CD4-positive, alpha-beta memory T cell (primary cell): ENCODE measurements at regions of chr14 and their contacts with region 1.

Region 1: GRCh38 chr14:106436310-106436905 is 910.0 kb downstream of the TMEM121 start:
- DNase-seq: peak in 4 of 5 donors; percentile 47 to 66 (median 56)
- H3K4me3 ChIP-seq: no peak overlapping the region
- H3K4me3 Mint-ChIP-seq: no peak overlapping the region
- H3K27ac ChIP-seq: no peak overlapping the region
- H3K27ac Mint-ChIP-seq: no peak overlapping the region
- H3K4me1 ChIP-seq: no peaks in the 10 kb centered on the region
- H3K4me1 Mint-ChIP-seq: peaks cover 0 to 4% (median 1%) of the 10 kb centered on the region in 4 donors
- H3K27me3 ChIP-seq: no peaks in the 10 kb centered on the region
- H3K27me3 Mint-ChIP-seq: peaks cover 3 to 22% of the 10 kb centered on the region in 2 donors

Region 2: GRCh38 chr14:106417224-106418049 is 19.0 kb before region 1 on chr14:
- CTCF ChIA-PET with region 1: interaction called, 51 read pairs
- POLR2A ChIA-PET with region 1: no interaction called
- intact Hi-C with region 1: no loop called
- DNase-seq: peak; percentile 55 to 87 (median 72)
- H3K4me3 ChIP-seq: no peak overlapping the region
- H3K4me3 Mint-ChIP-seq: peak overlapping the region in 2 of 8 donors; percentile 36 to 59
- H3K27ac ChIP-seq: no peak overlapping the region
- H3K27ac Mint-ChIP-seq: peak overlapping the region in 5 of 7 donors; percentile 37 to 91 (median 81)
- H3K4me1 ChIP-seq: no peaks in the 10 kb centered on the region
- H3K4me1 Mint-ChIP-seq: peaks cover 0 to 7% (median 3%) of the 10 kb centered on the region in 4 donors
- H3K27me3 ChIP-seq: no peaks in the 10 kb centered on the region
- H3K27me3 Mint-ChIP-seq: peaks cover 0 to 12% of the 10 kb centered on the region in 2 donors

Region 3: GRCh38 chr14:106518054-106518943 is 81.9 kb after region 1 on chr14:
- CTCF ChIA-PET with region 1: interaction called, 54 read pairs
- POLR2A ChIA-PET with region 1: no interaction called
- intact Hi-C with region 1: loop called (anchors 1 kb)
- DNase-seq: peak; percentile 77 to 81 (median 79)
- H3K4me3 ChIP-seq: no peak overlapping the region
- H3K4me3 Mint-ChIP-seq: peak overlapping the region in 1 of 8 donors; percentile 13
- H3K27ac ChIP-seq: no peak overlapping the region
- H3K27ac Mint-ChIP-seq: peak overlapping the region in 1 of 7 donors; percentile 35
- H3K4me1 ChIP-seq: peaks cover 14% of the 10 kb centered on the region
- H3K4me1 Mint-ChIP-seq: peaks cover 10 to 27% (median 20%) of the 10 kb centered on the region in 4 donors
- H3K27me3 ChIP-seq: no peaks in the 10 kb centered on the region
- H3K27me3 Mint-ChIP-seq: peaks cover 9 to 17% of the 10 kb centered on the region in 2 donors

Region 4: GRCh38 chr14:106530423-106531107 is 94.2 kb after region 1 on chr14:
- CTCF ChIA-PET with region 1: interaction called, 25 read pairs
- POLR2A ChIA-PET with region 1: no interaction called
- intact Hi-C with region 1: no loop called
- DNase-seq: peak; percentile 36 to 66 (median 44)
- H3K4me3 ChIP-seq: no peak overlapping the region
- H3K4me3 Mint-ChIP-seq: no peak overlapping the region
- H3K27ac ChIP-seq: no peak overlapping the region
- H3K27ac Mint-ChIP-seq: peak overlapping the region in 1 of 7 donors; percentile 27
- H3K4me1 ChIP-seq: no peaks in the 10 kb centered on the region
- H3K4me1 Mint-ChIP-seq: no peaks in the 10 kb centered on the region
- H3K27me3 ChIP-seq: no peaks in the 10 kb centered on the region
- H3K27me3 Mint-ChIP-seq: peaks cover 23 to 24% of the 10 kb centered on the region in 2 donors

Region 5: DNA sequence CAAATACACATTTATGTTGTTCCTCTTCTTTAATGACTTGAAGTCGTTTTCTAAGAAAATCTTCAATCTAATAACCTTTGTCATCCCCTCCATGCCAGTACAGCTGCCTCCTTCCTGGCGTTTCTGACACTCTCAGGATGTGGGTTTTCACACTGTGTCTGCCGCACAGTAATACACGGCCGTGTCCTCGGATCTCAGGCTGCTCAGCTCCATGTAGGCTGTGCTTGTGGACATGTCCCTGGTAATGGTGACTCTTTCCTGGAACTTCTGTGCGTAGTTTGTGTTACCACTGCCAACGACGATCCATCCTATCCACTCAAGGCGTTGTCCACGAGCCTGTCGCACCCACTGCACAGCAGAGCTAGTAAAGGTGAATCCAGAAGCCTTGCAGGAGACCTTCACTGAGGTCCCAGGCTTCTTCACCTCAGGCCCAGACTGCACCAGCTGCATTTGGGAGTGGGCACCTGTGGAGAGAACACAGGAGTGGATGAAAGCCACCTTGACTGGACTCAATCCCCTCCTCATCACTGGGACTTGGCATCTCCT is 185.9 kb after region 1 on chr14:
- CTCF ChIA-PET with region 1: no interaction called
- POLR2A ChIA-PET with region 1: no interaction called
- intact Hi-C with region 1: no loop called
- DNase-seq: peak in 4 of 5 donors; percentile 21 to 35 (median 24)
- H3K4me3 ChIP-seq: no peak overlapping the region
- H3K4me3 Mint-ChIP-seq: peak overlapping the region in 5 of 8 donors; percentile 2 to 46 (median 31)
- H3K27ac ChIP-seq: no peak overlapping the region
- H3K27ac Mint-ChIP-seq: no peak overlapping the region
- H3K4me1 ChIP-seq: peaks cover 15% of the 10 kb centered on the region
- H3K4me1 Mint-ChIP-seq: peaks cover 3 to 16% (median 9%) of the 10 kb centered on the region in 4 donors
- H3K27me3 ChIP-seq: no peaks in the 10 kb centered on the region
- H3K27me3 Mint-ChIP-seq: peaks cover 2 to 3% of the 10 kb centered on the region in 2 donors